ENCODE measurements at regions of chr6 and their contacts with region 1.

Region 1: GRCh38 chr6:32971581-32972352 is 3.4 kb downstream of the BRD2 start:
- DNase-seq: peak; percentile 99 to 100
- ATAC-seq: peak; percentile 83
- H3K4me3 ChIP-seq: peak overlapping the region; percentile 96 to 97
- H3K27ac ChIP-seq: peak overlapping the region; percentile 100
- H3K4me1 ChIP-seq: no peaks in the 10 kb centered on the region
- H3K27me3 ChIP-seq: peaks cover 0 to 2% of the 10 kb centered on the region in 2 donors

Region 2: DNA sequence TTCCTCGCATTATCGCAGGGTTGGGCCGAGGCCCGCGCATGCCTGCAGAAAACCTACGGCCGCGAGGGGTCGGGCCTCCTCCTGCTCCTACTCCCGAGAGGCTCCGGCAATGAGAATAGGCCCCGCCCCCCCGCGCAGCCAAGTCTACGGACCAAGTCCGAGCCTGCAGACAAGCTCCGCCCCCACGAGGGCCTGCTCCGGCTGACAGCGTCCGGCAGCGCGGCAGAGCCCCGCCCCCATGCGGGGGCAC is 776.2 kb before region 1 on chr6:
- intact Hi-C with region 1: loop called (anchors 5 to 10 kb)
- DNase-seq: peak; percentile 100
- ATAC-seq: peak; percentile 96
- H3K4me3 ChIP-seq: no peak overlapping the region
- H3K27ac ChIP-seq: no peak overlapping the region
- H3K4me1 ChIP-seq: no peaks in the 10 kb centered on the region
- H3K27me3 ChIP-seq: no peaks in the 10 kb centered on the region

Region 3: GRCh38 chr6:32843979-32844838 is 127.6 kb before region 1 on chr6 and contains the start of gene PSMB8:
- intact Hi-C with region 1: loop called in 1 of 2 experiments (anchors 5 kb)
- DNase-seq: peak; percentile 98
- ATAC-seq: peak; percentile 97
- H3K4me3 ChIP-seq: peak within 1 kb of the TSS; percentile 60 to 62
- H3K27ac ChIP-seq: peak within 1 kb of the TSS in 1 of 2 donors; percentile 69
- H3K4me1 ChIP-seq: no peaks in the 10 kb centered on the region
- H3K27me3 ChIP-seq: no peaks in the 10 kb centered on the region
- total RNA-seq, gene PSMB8: 40.8 to 58.4 TPM

Region 4: DNA sequence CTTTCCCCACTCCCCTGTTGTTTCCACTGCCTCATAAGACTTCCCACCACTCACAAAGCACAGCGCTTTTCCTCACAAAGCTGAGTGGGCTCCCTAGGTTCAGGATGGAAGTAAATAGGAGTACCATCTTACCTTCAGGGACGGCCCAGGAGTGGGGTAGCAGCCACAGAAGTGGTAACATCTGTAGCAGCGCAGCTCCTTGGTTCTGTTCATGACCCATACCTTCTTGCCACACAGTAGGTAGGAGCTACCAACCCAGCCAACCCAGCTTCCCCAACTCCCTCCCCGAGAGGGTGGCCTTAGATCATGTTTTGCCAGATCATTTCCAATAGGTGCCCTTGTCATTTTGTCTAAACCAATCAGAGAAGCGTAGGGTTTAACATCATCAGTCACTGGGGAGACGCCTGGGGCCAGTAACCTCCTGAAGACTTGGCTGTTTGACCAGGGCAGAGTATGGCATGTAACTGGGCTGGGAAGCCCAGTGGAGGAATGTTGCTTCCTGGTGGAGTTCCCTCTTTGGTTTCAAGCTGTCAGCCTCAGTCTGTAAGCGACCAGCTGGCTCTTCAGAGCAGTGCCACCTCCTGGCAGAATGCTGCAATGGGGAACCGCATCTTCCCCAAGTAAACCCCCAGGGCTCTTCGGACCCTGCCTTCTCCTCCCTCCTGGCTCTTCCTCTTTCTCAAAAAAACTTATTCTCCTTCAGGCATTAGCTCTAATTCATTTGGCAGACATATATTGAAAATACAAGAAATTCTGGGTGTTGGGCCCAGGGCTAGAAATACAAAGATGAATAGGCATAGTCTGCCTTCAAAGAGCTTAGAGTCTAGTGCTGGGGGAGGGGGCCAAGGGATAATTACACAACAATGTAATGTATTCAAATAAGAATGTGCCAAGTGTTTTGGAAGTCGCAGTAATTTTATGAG is 18.7 kb before region 1 on chr6 and contains the start of gene HLA-DMA:
- intact Hi-C with region 1: loop called in 1 of 2 experiments (anchors 1 kb)
- DNase-seq: peak; percentile 93
- ATAC-seq: peak; percentile 96
- H3K4me3 ChIP-seq: no peak within 1 kb of the TSS
- H3K27ac ChIP-seq: no peak within 1 kb of the TSS
- H3K4me1 ChIP-seq: no peaks in the 10 kb centered on the region
- H3K27me3 ChIP-seq: no peaks in the 10 kb centered on the region
- total RNA-seq, gene HLA-DMA: 36.9 to 109 TPM

Region 5: DNA sequence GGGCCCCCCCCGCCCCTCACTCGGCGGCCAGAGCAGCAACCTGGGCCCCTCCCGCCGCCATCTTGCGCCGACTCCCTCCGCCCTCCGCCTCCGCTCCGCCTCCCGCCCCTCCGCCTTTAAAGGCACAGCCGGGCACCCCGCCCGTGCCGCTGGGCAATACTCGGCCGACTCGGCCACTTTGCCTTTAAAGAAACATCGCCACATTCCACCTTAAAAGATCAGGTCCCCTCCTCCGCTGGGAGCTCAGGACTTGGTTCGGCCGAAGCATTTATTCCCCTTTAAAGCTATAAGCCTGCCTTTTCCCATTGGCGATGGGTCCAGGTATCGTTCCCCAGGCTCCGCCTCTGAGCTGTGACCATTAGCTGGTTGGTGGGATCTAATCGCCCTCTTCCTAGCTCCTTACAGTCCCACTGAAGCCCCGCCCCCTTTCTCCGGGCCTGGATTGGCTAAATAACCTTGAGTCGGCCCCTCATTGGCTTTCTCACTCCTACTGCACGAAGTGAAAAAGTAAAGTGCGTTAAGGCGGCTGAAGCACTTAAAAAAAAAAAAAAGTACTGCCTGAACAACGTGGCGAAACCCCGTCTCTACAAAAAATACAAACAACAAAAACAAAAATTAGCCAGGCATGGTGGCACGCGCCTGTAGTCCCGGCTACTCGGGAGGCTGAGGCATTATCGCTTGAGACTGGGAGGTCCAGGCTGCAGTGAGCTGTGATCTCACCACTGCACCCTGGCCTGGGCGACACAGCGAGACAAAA is 346.1 kb after region 1 on chr6 and contains the start of gene ZBTB22:
- intact Hi-C with region 1: loop called in 1 of 2 experiments (anchors 2 kb)
- DNase-seq: peak; percentile 99 to 100
- ATAC-seq: peak; percentile 87
- H3K4me3 ChIP-seq: peak within 1 kb of the TSS in 1 of 2 donors; percentile 45
- H3K27ac ChIP-seq: peak within 1 kb of the TSS in 1 of 2 donors; percentile 67
- H3K4me1 ChIP-seq: peaks cover 0 to 4% of the 10 kb centered on the region in 2 donors
- H3K27me3 ChIP-seq: no peaks in the 10 kb centered on the region
- total RNA-seq, gene ZBTB22: 21.3 TPM